Activated CD4-positive, alpha-beta T cell treated with anti-CD3 and anti-CD28 coated beads for 36 hours (primary cell): ENCODE measurements at regions of chr16 and their contacts with region 1.

Region 1: GRCh38 chr16:117379-118365 is 20.8 kb downstream of the NPRL3 start:
- DNase-seq: peak; percentile 79
- ATAC-seq: peak; percentile 82
- H3K4me3 Mint-ChIP-seq: no peak overlapping the region
- H3K27ac Mint-ChIP-seq: no peak overlapping the region
- H3K4me1 Mint-ChIP-seq: peaks cover 10% of the 10 kb centered on the region
- H3K27me3 Mint-ChIP-seq: no peaks in the 10 kb centered on the region

Region 2: DNA sequence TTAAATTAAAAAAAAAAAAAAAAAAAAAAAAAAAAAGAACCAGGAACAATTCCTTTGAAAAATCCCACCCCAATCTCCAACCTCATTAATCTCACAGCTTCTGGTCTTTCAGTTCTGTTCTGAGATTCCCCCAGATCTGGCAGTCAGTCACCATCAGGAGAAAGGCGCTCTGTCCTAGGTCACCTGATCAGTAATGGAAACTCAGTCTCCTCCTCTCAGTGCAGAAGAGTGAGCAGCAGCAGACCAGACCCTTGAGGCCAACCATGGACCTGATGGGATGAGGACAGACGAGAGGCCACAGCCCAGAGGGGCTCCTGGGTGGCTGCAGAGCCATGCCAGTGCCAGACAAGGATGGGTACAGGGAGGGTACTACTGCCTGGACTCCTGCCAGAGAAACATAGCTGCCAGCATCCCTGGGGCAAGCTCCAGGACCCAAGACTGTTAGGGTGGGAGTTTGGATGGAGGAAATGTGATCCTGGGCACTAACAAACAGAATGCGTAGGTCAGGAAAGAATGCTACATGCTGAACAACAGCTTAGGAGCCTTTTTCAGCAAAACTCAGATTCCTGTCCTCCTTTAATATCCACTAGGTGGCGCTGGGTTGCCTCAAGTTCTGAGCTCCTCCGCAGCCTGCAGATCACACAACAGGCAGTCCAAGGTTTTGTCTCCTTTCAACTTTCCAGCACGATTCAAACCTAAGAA is 10.9 kb before region 1 on chr16:
- CTCF ChIA-PET with region 1: interaction called, 10 read pairs
- POLR2A ChIA-PET with region 1: no interaction called
- intact Hi-C with region 1: no loop called
- DNase-seq: peak; percentile 72
- ATAC-seq: peak; percentile 81
- H3K4me3 Mint-ChIP-seq: no peak overlapping the region
- H3K27ac Mint-ChIP-seq: no peak overlapping the region
- H3K4me1 Mint-ChIP-seq: no peaks in the 10 kb centered on the region
- H3K27me3 Mint-ChIP-seq: no peaks in the 10 kb centered on the region

Region 3: GRCh38 chr16:132120-132519 is 14.4 kb after region 1 on chr16:
- CTCF ChIA-PET with region 1: interaction called, 14 read pairs
- POLR2A ChIA-PET with region 1: no interaction called
- intact Hi-C with region 1: no loop called
- DNase-seq: no peak
- ATAC-seq: no peak
- H3K4me3 Mint-ChIP-seq: no peak overlapping the region
- H3K27ac Mint-ChIP-seq: no peak overlapping the region
- H3K4me1 Mint-ChIP-seq: peaks cover 43% of the 10 kb centered on the region
- H3K27me3 Mint-ChIP-seq: no peaks in the 10 kb centered on the region

Region 4: DNA sequence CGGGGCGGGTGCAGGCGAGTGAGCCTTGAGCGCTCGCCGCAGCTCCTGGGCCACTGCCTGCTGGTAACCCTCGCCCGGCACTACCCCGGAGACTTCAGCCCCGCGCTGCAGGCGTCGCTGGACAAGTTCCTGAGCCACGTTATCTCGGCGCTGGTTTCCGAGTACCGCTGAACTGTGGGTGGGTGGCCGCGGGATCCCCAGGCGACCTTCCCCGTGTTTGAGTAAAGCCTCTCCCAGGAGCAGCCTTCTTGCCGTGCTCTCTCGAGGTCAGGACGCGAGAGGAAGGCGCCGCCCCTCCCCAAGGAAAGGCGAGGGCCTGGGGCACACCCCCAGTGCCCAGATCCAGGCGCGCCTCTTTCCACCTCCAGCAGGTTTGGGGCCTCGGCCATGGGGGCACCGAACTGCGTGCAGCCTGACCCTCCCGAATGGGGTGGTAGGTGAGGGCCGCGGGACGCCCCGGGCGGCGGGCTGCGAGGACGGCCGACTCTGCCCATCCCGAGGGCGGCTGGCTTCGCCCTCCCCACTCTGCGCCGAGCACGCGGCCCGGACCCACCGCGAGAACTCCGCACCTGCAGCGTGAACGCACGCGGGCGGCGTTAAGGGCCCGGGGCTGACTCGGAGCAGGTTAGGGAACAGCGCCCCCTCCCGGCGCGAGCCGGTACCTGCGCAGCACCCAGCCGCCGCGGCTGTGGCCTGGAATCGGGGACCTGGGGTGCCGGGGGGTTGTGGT is 63.4 kb after region 1 on chr16:
- CTCF ChIA-PET with region 1: interaction called, 6 read pairs
- POLR2A ChIA-PET with region 1: no interaction called
- intact Hi-C with region 1: loop called in 1 of 2 experiments (anchors 1 kb)
- DNase-seq: peak; percentile 94
- ATAC-seq: peak; percentile 88
- H3K4me3 Mint-ChIP-seq: peak overlapping the region; percentile 39
- H3K27ac Mint-ChIP-seq: no peak overlapping the region
- H3K4me1 Mint-ChIP-seq: peaks cover 3% of the 10 kb centered on the region
- H3K27me3 Mint-ChIP-seq: peaks cover 21% of the 10 kb centered on the region

Region 5: GRCh38 chr16:361872-362701 is 244.4 kb after region 1 on chr16:
- CTCF ChIA-PET with region 1: interaction called, 15 read pairs
- POLR2A ChIA-PET with region 1: no interaction called
- intact Hi-C with region 1: loop called in 1 of 2 experiments (anchors 1 kb)
- DNase-seq: peak; percentile 87
- ATAC-seq: peak; percentile 96
- H3K4me3 Mint-ChIP-seq: no peak overlapping the region
- H3K27ac Mint-ChIP-seq: no peak overlapping the region
- H3K4me1 Mint-ChIP-seq: peaks cover 5% of the 10 kb centered on the region
- H3K27me3 Mint-ChIP-seq: peaks cover 5% of the 10 kb centered on the region